Activated B cell treated with CpG ODN at 0.5 μM for 24 hours (primary cell): ENCODE measurements at regions of chrX and their contacts with region 1.

Region 1: GRCh38 chrX:152941328-152942106 is 43.6 kb downstream of the ZNF185 start:
- DNase-seq: peak; percentile 84
- ATAC-seq: peak; percentile 96
- H3K4me3 Mint-ChIP-seq: peak overlapping the region; percentile 87
- H3K27ac Mint-ChIP-seq: peak overlapping the region; percentile 83
- H3K4me1 Mint-ChIP-seq: peaks cover 9% of the 10 kb centered on the region
- H3K27me3 Mint-ChIP-seq: no peaks in the 10 kb centered on the region
- CTCF ChIP-seq: no peak

Region 2: DNA sequence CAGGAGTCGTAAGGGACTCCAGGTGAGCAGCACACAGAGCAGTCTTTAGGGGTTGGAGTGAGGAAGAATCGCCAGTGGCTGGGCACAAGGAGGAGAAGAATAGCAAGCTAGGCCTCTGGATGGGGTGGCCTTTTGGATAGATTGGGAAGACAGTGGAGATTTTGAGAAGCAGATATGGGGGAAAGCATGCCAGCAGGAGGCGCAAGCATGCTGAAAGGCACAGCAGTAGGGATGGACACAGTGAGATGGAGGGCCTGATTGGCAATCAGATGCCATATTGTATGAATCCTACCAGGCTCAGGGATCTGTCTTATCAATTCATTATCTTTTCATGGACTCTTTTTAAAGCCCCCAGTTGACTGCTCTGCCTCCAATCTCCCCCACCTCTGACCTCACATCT is 1089.2 kb before region 1 on chrX:
- CTCF ChIA-PET with region 1: no interaction called
- POLR2A ChIA-PET with region 1: no interaction called
- intact Hi-C with region 1: no loop called
- DNase-seq: no peak
- ATAC-seq: no peak
- H3K4me3 Mint-ChIP-seq: no peak overlapping the region
- H3K27ac Mint-ChIP-seq: no peak overlapping the region
- H3K4me1 Mint-ChIP-seq: no peaks in the 10 kb centered on the region
- H3K27me3 Mint-ChIP-seq: no peaks in the 10 kb centered on the region
- CTCF ChIP-seq: no peak

Region 3: GRCh38 chrX:152958524-152959465 is 17.3 kb after region 1 on chrX:
- CTCF ChIA-PET with region 1: interaction called, 10 read pairs
- POLR2A ChIA-PET with region 1: interaction called, 6 read pairs
- intact Hi-C with region 1: loop called (anchors 1 kb)
- DNase-seq: peak; percentile 79
- ATAC-seq: peak; percentile 95
- H3K4me3 Mint-ChIP-seq: peak overlapping the region; percentile 71
- H3K27ac Mint-ChIP-seq: peak overlapping the region; percentile 83
- H3K4me1 Mint-ChIP-seq: peaks cover 9% of the 10 kb centered on the region
- H3K27me3 Mint-ChIP-seq: no peaks in the 10 kb centered on the region
- CTCF ChIP-seq: no peak

Region 4: GRCh38 chrX:153333768-153334645 is 392.5 kb after region 1 on chrX and contains the start of gene ZNF275:
- CTCF ChIA-PET with region 1: no interaction called
- POLR2A ChIA-PET with region 1: interaction called, 3 read pairs
- intact Hi-C with region 1: loop called (anchors 5 kb)
- DNase-seq: peak; percentile 80
- ATAC-seq: peak; percentile 94
- H3K4me3 Mint-ChIP-seq: peak within 1 kb of the TSS; percentile 85
- H3K27ac Mint-ChIP-seq: peak within 1 kb of the TSS; percentile 76
- H3K4me1 Mint-ChIP-seq: peaks cover 44% of the 10 kb centered on the region
- H3K27me3 Mint-ChIP-seq: no peaks in the 10 kb centered on the region
- CTCF ChIP-seq: no peak
- total RNA-seq, gene ZNF275: 19.5 and 22.4 TPM in 2 replicates

Region 5: GRCh38 chrX:153507484-153508178 is 566.1 kb after region 1 on chrX:
- CTCF ChIA-PET with region 1: interaction called, 21 read pairs
- POLR2A ChIA-PET with region 1: no interaction called
- intact Hi-C with region 1: loop called (anchors 1 kb)
- DNase-seq: peak; percentile 68
- ATAC-seq: peak; percentile 99
- H3K4me3 Mint-ChIP-seq: no peak overlapping the region
- H3K27ac Mint-ChIP-seq: no peak overlapping the region
- H3K4me1 Mint-ChIP-seq: no peaks in the 10 kb centered on the region
- H3K27me3 Mint-ChIP-seq: no peaks in the 10 kb centered on the region
- CTCF ChIP-seq: no peak

Region 6: GRCh38 chrX:153599192-153600031 is 657.9 kb after region 1 on chrX:
- CTCF ChIA-PET with region 1: no interaction called
- POLR2A ChIA-PET with region 1: no interaction called
- intact Hi-C with region 1: loop called (anchors 5 kb)
- DNase-seq: peak; percentile 82
- ATAC-seq: peak; percentile 84
- H3K4me3 Mint-ChIP-seq: peak overlapping the region; percentile 77
- H3K27ac Mint-ChIP-seq: no peak overlapping the region
- H3K4me1 Mint-ChIP-seq: peaks cover 36% of the 10 kb centered on the region
- H3K27me3 Mint-ChIP-seq: no peaks in the 10 kb centered on the region
- CTCF ChIP-seq: no peak

Region 7: DNA sequence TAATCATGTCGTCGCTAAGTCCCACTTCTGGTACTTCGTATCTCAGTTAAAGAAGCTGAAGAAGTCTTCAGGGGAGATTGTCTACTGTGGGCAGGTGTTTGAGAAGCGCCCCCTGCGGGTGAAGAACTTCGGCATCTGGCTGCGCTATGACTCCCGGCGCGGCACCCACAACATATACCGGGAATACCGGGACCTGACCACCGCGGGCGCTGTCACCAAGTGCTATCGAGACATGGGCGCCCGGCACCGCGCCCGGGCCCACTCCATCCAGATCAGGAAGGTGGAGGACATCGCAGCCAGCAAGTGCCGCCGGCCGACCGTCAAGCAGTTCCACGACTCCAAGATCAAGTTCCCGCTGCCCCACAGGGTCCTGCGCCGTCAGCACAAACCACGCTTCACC is 720.7 kb after region 1 on chrX:
- CTCF ChIA-PET with region 1: interaction called, 7 read pairs
- POLR2A ChIA-PET with region 1: no interaction called
- intact Hi-C with region 1: loop called (anchors 1 kb)
- DNase-seq: peak; percentile 44
- ATAC-seq: no peak
- H3K4me3 Mint-ChIP-seq: peak overlapping the region; percentile 55
- H3K27ac Mint-ChIP-seq: no peak overlapping the region
- H3K4me1 Mint-ChIP-seq: peaks cover 2% of the 10 kb centered on the region
- H3K27me3 Mint-ChIP-seq: peaks cover 11% of the 10 kb centered on the region
- CTCF ChIP-seq: no peak

Region 8: GRCh38 chrX:153763989-153764755 is 822.7 kb after region 1 on chrX and contains the start of gene PLXNB3:
- CTCF ChIA-PET with region 1: no interaction called
- POLR2A ChIA-PET with region 1: no interaction called
- intact Hi-C with region 1: loop called (anchors 10 kb)
- DNase-seq: peak; percentile 68
- ATAC-seq: peak; percentile 90
- H3K4me3 Mint-ChIP-seq: no peak within 1 kb of the TSS
- H3K27ac Mint-ChIP-seq: no peak within 1 kb of the TSS
- H3K4me1 Mint-ChIP-seq: peaks cover 12% of the 10 kb centered on the region
- H3K27me3 Mint-ChIP-seq: no peaks in the 10 kb centered on the region
- CTCF ChIP-seq: peak; percentile 34
- total RNA-seq, gene PLXNB3: not detected in 2 replicates